ENCODE measurements at regions of chr1 and their contacts with region 1.

Region 1: GRCh38 chr1:38403667-38404066 is 357.1 kb upstream of the POU3F1 start:
- DNase-seq: no peak
- H3K4me3 ChIP-seq: no peak overlapping the region
- H3K27ac ChIP-seq: no peak overlapping the region
- H3K4me1 ChIP-seq: no peaks in the 10 kb centered on the region
- H3K27me3 ChIP-seq: no peaks in the 10 kb centered on the region
- CTCF ChIP-seq: no peak

Region 2: DNA sequence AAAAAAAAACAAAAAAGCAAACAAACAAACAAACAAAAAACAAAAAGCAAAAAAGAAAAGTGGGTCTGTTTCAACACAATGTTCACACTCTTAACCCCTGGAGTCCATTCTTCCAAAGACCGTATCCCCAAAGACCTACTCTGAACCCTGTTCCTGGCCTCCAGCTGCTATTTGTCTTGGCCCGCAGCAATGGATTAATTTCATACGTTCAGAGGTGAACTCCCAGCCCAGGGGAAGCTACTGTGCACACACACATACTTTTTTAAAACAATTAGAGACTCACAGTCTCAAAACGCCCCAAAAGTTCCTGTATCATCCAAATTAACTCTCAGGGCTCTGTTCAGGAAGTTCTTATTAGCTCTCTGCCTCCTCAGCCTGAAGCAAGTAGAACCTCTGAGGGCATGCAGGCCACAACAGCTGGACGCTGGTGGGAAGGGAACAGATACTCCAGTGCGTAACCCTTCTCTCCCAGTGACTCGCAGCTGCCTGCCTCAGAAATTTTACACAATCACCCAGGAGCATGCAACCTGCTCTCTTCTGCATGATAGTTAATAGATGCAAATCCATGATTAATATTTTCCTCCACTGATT is 60.5 kb after region 1 on chr1:
- intact Hi-C with region 1: loop called (anchors 10 kb)
- DNase-seq: no peak
- H3K4me3 ChIP-seq: no peak overlapping the region
- H3K27ac ChIP-seq: no peak overlapping the region
- H3K4me1 ChIP-seq: no peaks in the 10 kb centered on the region
- H3K27me3 ChIP-seq: peaks cover 41% of the 10 kb centered on the region
- CTCF ChIP-seq: no peak

Region 3: GRCh38 chr1:38814984-38815464 is 411.4 kb after region 1 on chr1:
- intact Hi-C with region 1: no loop called
- DNase-seq: no peak
- H3K4me3 ChIP-seq: no peak overlapping the region
- H3K27ac ChIP-seq: no peak overlapping the region
- H3K4me1 ChIP-seq: peaks cover 13% of the 10 kb centered on the region
- H3K27me3 ChIP-seq: peaks cover 100% of the 10 kb centered on the region
- CTCF ChIP-seq: no peak